AG04449 (cell line): ENCODE measurements at regions of chr20 and their contacts with region 1.

Region 1: GRCh38 chr20:60210779-60211617 is 252.8 kb downstream of the CDH26 start:
- DNase-seq: peak; percentile 4
- H3K4me3 ChIP-seq: no peak overlapping the region
- CTCF ChIP-seq: peak; percentile 95

Region 2: DNA sequence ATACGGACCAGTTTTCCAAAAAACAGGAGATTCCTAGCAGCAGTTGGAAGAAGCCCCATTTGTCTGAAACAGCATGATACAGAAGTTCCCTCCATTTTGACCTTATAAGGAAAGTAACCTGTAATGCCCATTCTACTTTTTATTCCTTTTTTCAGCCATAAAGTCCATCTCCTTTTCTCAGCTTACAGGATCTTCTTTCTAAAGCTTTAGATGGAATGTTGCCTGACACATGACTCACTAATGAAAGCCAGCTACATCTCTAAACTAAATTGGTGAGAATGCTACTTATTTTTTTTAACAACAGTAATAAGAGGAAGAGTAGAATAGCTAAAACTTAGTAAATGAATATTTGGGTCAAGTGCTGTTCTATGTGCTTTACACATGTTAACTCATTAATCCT is 18.7 kb before region 1 on chr20:
- CTCF ChIA-PET with region 1: interaction called, 21 read pairs
- POLR2A ChIA-PET with region 1: no interaction called
- DNase-seq: peak; percentile 5
- H3K4me3 ChIP-seq: no peak overlapping the region
- CTCF ChIP-seq: no peak

Region 3: DNA sequence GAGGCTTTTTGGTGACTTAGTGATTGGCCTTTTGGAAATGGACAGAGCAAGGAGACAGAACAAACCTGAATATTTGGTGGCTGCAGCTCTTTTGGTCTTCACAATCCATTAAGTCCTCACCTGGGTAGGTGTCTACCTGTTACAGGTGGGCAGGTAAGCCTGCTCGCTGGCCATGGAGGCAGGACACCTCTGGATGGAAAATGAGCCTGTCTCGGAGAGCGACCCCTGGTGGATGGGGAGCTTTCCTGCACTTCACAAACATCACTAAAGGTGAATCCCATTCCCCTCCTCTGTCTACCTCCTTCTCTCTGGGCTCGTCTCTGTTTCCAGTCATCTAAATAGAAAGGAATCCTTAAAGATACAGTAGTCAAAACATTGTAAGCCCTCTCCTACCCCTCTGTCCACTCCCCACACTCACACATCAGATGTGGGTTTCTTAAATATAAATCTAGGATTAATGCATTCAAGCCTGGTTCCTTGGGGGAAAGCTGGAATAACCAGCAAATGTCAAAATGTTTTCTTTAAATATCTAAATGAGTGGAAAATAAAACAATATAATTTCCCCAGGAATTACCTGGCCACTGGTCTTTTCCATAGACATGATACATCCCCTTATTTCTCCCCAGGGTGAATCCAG is 52.1 kb after region 1 on chr20:
- CTCF ChIA-PET with region 1: interaction called, 59 read pairs
- POLR2A ChIA-PET with region 1: no interaction called
- DNase-seq: no peak
- H3K4me3 ChIP-seq: no peak overlapping the region
- CTCF ChIP-seq: peak; percentile 75

Region 4: GRCh38 chr20:61234803-61235113 is 1023.8 kb after region 1 on chr20:
- CTCF ChIA-PET with region 1: interaction called, 36 read pairs
- POLR2A ChIA-PET with region 1: no interaction called
- DNase-seq: no peak
- H3K4me3 ChIP-seq: no peak overlapping the region
- CTCF ChIP-seq: no peak

Region 5: DNA sequence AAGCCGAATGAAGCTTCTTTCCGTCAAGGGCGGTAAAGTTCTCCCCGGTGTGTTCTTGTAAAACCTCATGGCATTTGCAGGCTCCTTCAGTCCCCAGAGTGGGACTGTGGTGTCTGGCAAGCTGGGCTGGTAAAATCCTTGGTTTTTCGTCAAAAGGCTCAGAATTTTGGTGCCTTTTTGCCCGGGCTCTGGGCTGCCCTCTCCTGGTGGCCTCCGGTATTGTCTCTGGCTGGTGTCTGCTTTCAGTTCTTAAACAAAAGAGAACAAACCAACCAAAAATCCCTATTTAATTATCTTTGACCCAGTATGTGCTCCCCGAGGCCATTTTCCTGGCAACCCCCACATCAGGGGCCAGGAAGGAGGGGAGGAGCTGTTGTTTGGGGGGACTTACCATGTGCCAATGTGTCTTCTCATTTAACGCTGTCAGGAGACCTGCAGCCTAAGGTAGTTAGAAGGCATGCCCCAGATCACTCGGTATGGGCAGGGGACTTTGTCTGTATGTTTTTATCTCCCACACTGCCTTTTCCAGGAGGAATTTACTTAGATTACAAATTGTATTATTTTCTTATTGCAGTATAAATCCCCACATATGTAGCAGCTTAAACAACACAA is 1052.2 kb after region 1 on chr20:
- CTCF ChIA-PET with region 1: interaction called, 11 read pairs
- POLR2A ChIA-PET with region 1: no interaction called
- DNase-seq: no peak
- H3K4me3 ChIP-seq: no peak overlapping the region
- CTCF ChIP-seq: peak; percentile 80